Activated T-helper 1 cell treated with anti-CD3 and anti-CD28 coated beads, Interleukin-12 subunit alpha, Interleukin-12 subunit beta, Interleukin-2, Interleukin-4 antibody, amounts not matched to agents 30 ng/mL and 10 ng/mL and 1 ng/mL, durations not matched to agents 14 hours and 24 hours and 36 hours (primary cell): ENCODE measurements at regions of chr2 and their contacts with region 1.

Region 1: DNA sequence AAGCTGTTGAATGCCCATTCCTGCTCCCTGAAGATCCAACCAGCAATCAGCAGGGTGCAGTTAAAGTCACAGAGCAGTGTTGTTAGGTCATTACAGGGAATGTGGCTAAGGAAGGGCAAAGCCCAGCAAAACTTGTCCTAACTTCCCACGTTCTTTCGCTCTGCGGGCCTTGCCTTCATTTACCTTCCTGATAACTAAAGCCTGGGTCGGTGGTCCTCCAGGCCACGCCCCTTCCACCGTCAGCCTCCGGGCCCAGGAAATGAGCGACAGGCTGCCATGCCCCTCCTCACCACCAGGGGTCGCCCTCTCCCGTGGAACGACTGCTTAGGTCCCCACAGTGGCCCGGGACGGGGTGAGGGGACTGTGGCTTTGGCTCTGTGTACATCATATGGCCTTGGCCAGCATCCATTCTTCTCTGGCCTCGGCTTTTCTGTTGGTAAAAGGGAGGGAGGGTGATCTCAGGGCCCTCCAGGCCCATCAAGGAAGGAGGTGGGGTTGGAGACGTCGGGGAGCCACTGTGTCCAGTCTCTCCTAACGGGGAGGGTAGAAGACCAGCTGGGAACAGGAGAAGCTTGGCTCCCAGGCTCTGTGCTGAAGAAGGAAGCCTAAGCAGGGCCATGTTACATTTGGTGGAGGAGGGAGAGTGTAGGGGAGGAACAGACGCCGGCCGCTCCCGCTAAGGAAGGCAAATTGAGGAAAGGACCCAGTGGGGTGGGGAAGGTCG is 2.2 kb downstream of the SH2D6 start:
- DNase-seq: peak; percentile 86
- H3K4me3 Mint-ChIP-seq: peak overlapping the region; percentile 80
- H3K27ac Mint-ChIP-seq: peak overlapping the region; percentile 84
- H3K4me1 Mint-ChIP-seq: peaks cover 34% of the 10 kb centered on the region
- H3K27me3 Mint-ChIP-seq: no peaks in the 10 kb centered on the region

Region 2: DNA sequence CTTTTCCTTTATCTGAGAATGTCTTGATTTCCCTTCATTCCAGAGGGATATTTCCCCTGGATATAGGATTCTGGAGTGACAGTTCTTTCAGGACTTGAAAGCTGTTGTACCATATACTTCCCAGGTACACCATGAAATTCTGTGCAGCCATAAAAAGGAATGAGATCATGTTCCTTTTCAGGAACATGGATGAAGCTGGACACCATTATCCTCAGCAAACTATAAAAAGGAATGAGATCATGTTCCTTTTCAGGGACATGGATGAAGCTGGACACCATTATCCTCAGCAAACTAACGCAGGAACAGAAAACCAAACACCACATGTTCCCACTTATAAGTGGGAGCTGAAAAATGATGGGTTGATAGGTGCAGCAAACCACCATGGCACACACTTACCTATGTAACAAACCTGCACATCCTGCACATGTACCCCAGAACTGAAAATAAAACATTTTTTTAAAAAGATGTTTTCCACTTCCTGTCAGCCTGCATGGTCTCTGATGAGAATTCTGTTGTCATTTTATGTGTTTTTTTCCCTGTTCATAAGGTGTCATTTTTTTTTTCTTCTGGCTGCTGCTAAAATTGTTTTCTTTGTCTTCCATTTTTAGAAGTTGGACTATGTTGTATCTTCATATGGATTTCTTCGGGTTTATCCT is 771.1 kb before region 1 on chr2:
- intact Hi-C with region 1: no loop called
- DNase-seq: no peak
- H3K4me3 Mint-ChIP-seq: peak overlapping the region; percentile 12
- H3K27ac Mint-ChIP-seq: no peak overlapping the region
- H3K4me1 Mint-ChIP-seq: peaks cover 62% of the 10 kb centered on the region
- H3K27me3 Mint-ChIP-seq: peaks cover 2% of the 10 kb centered on the region

Region 3: DNA sequence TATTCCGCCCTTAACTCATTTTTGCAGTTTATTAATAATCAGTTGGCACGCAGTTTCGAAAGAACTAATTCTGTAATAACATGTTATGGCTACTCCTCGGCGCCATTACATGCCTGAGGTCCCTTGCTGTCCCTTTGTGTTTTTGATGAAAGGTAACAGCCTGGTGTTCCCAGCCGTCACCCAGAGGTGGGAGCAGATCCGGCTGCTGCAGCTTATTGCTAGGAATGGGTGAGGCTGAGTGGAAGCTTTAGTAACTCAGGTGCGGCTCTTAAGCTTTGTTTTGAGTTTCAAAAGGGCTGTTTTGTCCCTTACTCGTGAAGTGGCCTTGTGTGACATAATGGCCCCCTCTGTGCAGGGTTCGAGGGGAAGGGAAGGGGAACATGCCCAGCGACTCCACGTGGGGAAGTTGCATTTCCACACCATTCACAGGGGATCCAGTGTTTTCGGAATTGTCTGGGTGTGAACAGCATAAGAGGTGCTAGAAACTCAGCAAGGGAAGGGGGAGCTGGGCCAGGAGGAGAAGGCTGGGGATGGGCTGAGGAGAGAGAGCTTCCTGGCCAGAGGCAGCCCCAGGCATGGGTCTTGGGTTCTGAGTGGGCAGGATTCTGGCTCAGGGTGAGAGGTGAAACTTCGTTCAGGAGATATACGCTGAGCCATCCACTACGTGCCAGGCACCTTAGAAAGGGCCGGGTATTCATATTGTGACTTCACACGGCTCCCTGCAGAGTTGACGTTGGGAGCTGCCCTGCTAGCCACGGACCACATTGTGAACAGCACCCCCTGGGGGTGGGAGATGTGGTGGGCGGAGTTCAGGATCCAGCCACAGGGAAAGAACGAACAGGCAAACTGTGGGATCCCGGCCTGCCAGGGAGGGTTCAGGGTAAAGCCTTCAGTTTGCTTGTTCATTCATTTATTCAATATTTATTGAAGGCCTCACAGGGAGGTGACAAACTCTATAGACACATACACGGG is 177.3 kb before region 1 on chr2:
- intact Hi-C with region 1: no loop called
- DNase-seq: no peak
- H3K4me3 Mint-ChIP-seq: no peak overlapping the region
- H3K27ac Mint-ChIP-seq: no peak overlapping the region
- H3K4me1 Mint-ChIP-seq: no peaks in the 10 kb centered on the region
- H3K27me3 Mint-ChIP-seq: peaks cover 12% of the 10 kb centered on the region

Region 4: GRCh38 chr2:85327822-85328617 is 92.7 kb before region 1 on chr2 and contains the start of gene TGOLN2:
- intact Hi-C with region 1: loop called (anchors 1 kb)
- DNase-seq: peak; percentile 92
- H3K4me3 Mint-ChIP-seq: peak within 1 kb of the TSS; percentile 95
- H3K27ac Mint-ChIP-seq: peak within 1 kb of the TSS; percentile 99
- H3K4me1 Mint-ChIP-seq: peaks cover 34% of the 10 kb centered on the region
- H3K27me3 Mint-ChIP-seq: no peaks in the 10 kb centered on the region
- total RNA-seq, gene TGOLN2: 102 and 104 TPM in 2 replicates

Region 5: DNA sequence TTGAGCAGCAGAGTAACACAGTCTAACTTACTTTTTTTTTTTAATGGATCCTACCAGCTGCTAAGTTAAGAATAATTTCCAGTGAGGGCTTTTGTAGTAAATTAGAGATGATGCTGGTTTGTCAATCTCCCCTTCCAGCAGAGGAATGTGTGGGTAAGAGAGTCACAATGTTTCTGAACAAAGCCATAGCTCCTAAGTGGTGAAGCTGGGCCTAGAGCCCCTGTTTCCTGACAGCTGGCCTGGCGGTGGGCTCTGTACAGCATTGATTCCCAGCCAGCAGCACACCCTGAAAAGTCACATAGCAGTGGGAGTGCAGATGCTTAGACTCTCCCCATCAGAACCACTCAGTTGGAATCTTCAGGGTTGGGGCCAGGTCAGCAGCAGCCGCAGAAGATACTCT is 35.0 kb before region 1 on chr2:
- intact Hi-C with region 1: no loop called
- DNase-seq: no peak
- H3K4me3 Mint-ChIP-seq: no peak overlapping the region
- H3K27ac Mint-ChIP-seq: no peak overlapping the region
- H3K4me1 Mint-ChIP-seq: no peaks in the 10 kb centered on the region
- H3K27me3 Mint-ChIP-seq: no peaks in the 10 kb centered on the region

Region 6: DNA sequence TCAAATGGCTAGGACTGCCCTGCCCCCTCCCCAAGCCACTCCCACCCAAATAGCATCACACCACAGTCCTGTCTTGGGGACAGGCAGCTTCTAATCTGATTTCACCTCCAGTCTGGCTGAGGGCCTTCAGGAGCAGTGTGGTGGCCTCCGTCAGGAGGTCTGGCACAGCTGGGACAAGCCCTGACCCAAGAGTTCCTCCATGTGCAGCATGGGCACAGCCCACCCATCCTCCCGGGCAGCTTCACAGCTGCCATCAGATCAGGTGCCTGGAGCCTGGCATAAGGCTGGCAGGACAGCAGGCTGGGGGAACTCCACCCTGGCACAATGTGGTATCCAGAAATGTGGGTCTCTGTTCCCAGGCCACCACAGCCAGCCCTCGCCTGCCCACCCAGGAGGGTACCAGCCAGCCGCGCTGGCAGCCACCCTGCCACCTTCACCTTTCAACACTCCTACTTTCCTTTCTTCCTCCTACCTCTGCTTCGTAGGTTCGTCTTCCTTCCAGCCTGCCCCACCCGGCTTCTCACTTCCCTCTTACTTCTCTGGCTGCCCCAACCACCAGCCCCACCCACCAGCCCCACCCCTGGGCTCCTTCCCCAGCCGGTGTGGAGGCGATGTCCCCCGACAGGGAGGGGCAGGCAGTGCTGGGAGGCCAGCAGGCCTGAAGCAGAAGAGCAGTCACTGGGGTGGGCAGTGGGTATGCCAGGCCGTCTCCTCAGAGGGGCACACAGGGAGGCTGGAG is 10.7 kb before region 1 on chr2 and contains the start of gene CAPG:
- intact Hi-C with region 1: loop called (anchors 1 kb)
- DNase-seq: peak; percentile 33
- H3K4me3 Mint-ChIP-seq: peak within 1 kb of the TSS; percentile 82
- H3K27ac Mint-ChIP-seq: peak within 1 kb of the TSS; percentile 66
- H3K4me1 Mint-ChIP-seq: peaks cover 60% of the 10 kb centered on the region
- H3K27me3 Mint-ChIP-seq: peaks cover 7% of the 10 kb centered on the region
- total RNA-seq, gene CAPG: 35.5 and 38.2 TPM in 2 replicates

Region 7: DNA sequence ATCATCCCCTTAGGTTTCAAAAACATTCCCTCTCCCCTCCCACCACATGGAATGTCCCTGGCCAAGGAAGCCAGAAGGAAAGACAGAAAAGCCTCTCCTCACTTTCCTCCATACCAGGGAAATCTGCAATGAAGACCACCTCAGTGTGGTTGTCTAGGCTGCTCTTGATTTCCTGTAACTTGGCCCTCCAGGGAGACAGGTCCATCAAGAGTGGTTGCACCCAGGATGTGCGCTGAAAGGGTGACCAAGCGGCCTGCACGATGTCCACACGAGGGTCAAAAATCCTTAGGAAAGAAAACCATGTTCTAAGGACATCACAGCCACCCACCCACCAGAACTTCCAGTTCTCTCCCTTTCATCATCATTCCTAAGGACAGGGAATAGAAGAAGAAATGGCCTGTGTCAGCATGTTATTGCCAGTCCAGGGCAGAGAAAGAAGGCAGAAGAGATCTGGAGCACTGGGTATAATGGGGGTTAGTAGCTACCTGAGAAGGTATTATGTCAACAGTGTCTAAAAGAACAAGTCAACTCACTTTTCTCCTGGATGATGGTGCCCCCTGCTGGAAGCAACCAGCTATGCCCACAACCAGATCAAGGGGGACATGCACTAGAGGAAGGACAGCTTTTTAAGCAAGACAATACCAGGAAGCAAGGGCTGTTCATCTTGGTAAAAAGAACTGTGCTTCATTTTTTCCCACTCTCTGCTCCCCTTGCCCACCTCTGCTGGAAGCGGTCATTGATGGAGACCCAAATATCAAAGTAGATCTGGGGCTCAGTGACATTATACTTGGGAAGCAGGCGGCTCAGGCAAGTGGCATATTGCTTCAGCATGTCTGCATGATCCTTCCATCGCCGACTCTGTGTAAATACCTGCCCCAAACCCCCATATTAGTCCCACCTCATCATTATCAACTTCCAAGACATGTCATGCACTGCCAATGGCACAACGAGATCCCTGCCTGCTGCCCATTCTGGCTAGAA is 131.3 kb after region 1 on chr2:
- intact Hi-C with region 1: loop called (anchors 1 kb)
- DNase-seq: peak; percentile 80
- H3K4me3 Mint-ChIP-seq: no peak overlapping the region
- H3K27ac Mint-ChIP-seq: no peak overlapping the region
- H3K4me1 Mint-ChIP-seq: peaks cover 8% of the 10 kb centered on the region
- H3K27me3 Mint-ChIP-seq: no peaks in the 10 kb centered on the region

Region 8: DNA sequence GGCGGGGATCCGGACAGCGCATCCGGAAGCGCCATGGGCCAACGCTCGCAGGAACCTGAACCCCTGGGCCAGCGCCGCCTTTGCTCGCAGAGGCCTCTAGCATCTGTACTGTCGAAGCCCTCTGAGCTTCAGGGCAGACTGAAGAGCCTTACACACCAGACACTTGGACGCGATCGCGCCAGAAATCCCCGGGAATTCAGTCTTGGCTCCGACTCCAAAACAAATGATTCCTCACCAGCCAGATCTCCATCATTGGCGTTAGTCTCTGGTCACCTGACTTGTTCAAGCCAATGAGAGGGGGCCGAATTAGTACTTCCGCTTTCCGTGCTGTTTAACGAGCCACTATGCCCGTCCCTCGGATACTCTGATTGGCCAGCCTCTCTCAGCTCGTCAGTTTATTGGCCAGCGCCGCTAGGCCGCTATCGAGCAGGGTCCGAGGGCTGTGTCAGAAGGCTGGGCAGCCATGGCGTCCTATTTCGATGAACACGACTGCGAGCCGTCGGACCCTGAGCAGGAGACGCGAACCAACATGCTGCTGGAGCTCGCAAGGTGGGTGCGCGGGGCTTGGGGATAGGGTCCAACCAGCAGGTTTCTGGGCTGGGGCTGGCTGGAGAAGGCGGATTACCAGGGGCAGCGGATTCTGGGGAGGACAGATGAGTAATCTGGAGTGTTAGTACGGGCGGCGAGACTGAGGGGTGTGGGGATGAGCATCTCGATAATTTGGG is 174.8 kb after region 1 on chr2 and contains the start of gene RNF181:
- intact Hi-C with region 1: loop called (anchors 1 kb)
- DNase-seq: peak; percentile 91
- H3K4me3 Mint-ChIP-seq: peak within 1 kb of the TSS; percentile 99
- H3K27ac Mint-ChIP-seq: peak within 1 kb of the TSS; percentile 92
- H3K4me1 Mint-ChIP-seq: peaks cover 22% of the 10 kb centered on the region
- H3K27me3 Mint-ChIP-seq: no peaks in the 10 kb centered on the region
- total RNA-seq, gene RNF181: 111 and 116 TPM in 2 replicates

Region 9: GRCh38 chr2:86105252-86105968 is 684.7 kb after region 1 on chr2 and contains the start of gene POLR1A:
- intact Hi-C with region 1: loop called (anchors 5 kb)
- DNase-seq: peak; percentile 84
- H3K4me3 Mint-ChIP-seq: peak within 1 kb of the TSS; percentile 91
- H3K27ac Mint-ChIP-seq: peak within 1 kb of the TSS; percentile 99
- H3K4me1 Mint-ChIP-seq: peaks cover 55% of the 10 kb centered on the region
- H3K27me3 Mint-ChIP-seq: no peaks in the 10 kb centered on the region
- total RNA-seq, gene POLR1A: 69.7 and 74.6 TPM in 2 replicates